WTC11 (cell line): ENCODE measurements at regions of chr11 and their contacts with region 1.

Region 1: DNA sequence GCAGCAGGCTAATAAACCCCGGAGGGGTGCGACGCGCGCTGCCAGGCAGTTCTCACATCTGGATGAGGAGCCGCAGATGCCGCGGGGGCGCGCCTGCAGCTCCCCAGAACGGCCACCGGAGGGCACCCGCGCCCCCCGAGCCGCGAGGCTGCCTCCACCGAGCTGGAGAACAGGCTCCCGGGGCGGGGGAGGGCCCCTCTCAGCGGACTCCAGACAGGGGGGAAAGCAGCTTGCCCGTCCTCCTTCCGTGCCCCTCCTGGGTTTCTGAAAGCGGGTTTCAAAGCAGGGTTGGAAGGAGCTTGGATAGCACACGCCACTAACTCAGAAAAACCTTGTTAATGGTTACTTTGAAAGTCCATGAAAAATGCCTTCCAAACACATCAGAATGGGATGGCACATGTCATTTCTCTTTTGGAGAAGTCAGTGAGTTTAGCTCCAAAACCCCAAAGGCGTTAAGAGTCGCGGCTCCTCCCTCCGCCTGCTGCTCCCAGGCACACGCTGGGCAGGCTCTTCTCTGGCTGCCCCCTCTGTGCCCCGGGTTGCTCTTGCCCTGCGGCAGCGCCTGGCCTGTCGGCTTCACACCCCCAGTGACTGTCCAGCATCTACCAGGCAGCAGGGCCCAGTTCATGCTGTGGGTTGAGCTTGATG is 317.8 kb downstream of the NTM start:
- DNase-seq: peak; percentile 81
- ATAC-seq: peak; percentile 62
- H3K4me3 Mint-ChIP-seq: no peak overlapping the region
- H3K27ac Mint-ChIP-seq: no peak overlapping the region
- H3K4me1 Mint-ChIP-seq: 0 out of 2 replicates have a peak, but pooled peaks cover 6% of the 10 kb centered on the region
- H3K27me3 Mint-ChIP-seq: peaks cover 24% of the 10 kb centered on the region
- CTCF ChIP-seq: peak; percentile 81

Region 2: GRCh38 chr11:131518305-131518838 is 169.8 kb before region 1 on chr11:
- CTCF ChIA-PET with region 1: no interaction called
- POLR2A ChIA-PET with region 1: no interaction called
- DNase-seq: no peak
- ATAC-seq: no peak
- H3K4me3 Mint-ChIP-seq: no peak overlapping the region
- H3K27ac Mint-ChIP-seq: no peak overlapping the region
- H3K4me1 Mint-ChIP-seq: peaks cover 7% of the 10 kb centered on the region; the same call in 1 of the 2 replicates
- H3K27me3 Mint-ChIP-seq: no peaks in the 10 kb centered on the region; the same call in 1 of the 2 replicates
- CTCF ChIP-seq: no peak

Region 3: GRCh38 chr11:131629925-131630540 is 58.1 kb before region 1 on chr11:
- CTCF ChIA-PET with region 1: no interaction called
- POLR2A ChIA-PET with region 1: no interaction called
- DNase-seq: no peak
- ATAC-seq: no peak
- H3K4me3 Mint-ChIP-seq: no peak overlapping the region
- H3K27ac Mint-ChIP-seq: no peak overlapping the region
- H3K4me1 Mint-ChIP-seq: peaks cover 39% of the 10 kb centered on the region
- H3K27me3 Mint-ChIP-seq: no peaks in the 10 kb centered on the region
- CTCF ChIP-seq: no peak

Region 4: GRCh38 chr11:131910523-131911387 is 222.6 kb after region 1 on chr11:
- CTCF ChIA-PET with region 1: interaction called, 17 read pairs
- POLR2A ChIA-PET with region 1: no interaction called
- DNase-seq: peak; percentile 50
- ATAC-seq: peak; percentile 32
- H3K4me3 Mint-ChIP-seq: peak overlapping the region; percentile 88
- H3K27ac Mint-ChIP-seq: no peak overlapping the region
- H3K4me1 Mint-ChIP-seq: peaks cover 52% of the 10 kb centered on the region
- H3K27me3 Mint-ChIP-seq: peaks cover 8% of the 10 kb centered on the region; the same call in 1 of the 2 replicates
- CTCF ChIP-seq: no peak